Left ventricle myocardium inferior (tissue), 1 donor: ENCODE measurements at regions of chr3 and their contacts with region 1.

Region 1: DNA sequence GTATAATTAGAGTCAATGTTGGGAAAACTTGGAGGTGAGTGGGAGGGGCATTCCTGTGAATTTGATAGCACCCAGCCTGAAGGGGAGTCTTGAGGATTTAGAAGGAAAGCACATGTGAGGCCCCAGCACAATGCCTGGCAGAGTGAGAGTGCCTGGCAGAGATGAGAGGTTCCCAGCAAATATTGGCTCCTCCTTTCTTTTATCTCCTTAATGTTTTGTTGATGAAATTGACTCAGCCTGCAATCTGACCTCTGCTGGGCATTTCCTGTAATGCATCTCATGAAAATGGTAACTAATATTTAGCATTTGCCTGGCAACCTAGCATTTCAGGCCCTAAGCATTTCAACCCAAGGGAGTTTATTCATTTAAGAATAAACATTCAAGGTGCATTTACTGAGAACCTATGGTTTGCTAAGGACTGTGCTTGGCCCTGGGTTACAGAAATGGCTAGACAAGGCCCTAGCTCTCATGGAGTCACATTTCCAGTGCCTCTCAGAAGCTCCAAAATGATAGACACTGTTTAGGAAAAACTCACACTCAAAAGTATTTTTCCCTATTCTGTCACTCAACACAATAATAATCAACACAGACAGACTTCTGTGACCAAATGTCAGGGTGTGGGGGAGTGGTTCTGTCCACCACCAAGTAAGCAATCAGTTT is 19.0 kb downstream of the PDHB start:
- DNase-seq: peak; percentile 33
- H3K4me3 ChIP-seq: no peak overlapping the region
- H3K27ac ChIP-seq: peak overlapping the region; percentile 12
- H3K4me1 ChIP-seq: peaks cover 23% of the 10 kb centered on the region
- H3K27me3 ChIP-seq: no peaks in the 10 kb centered on the region
- CTCF ChIP-seq: peak; percentile 86

Region 2: GRCh38 chr3:58324391-58325390 is 90.0 kb before region 1 on chr3:
- intact Hi-C with region 1: loop called (anchors 5 kb)
- DNase-seq: no peak
- H3K4me3 ChIP-seq: no peak overlapping the region
- H3K27ac ChIP-seq: peak overlapping the region; percentile 50
- H3K4me1 ChIP-seq: peaks cover 19% of the 10 kb centered on the region
- H3K27me3 ChIP-seq: no peaks in the 10 kb centered on the region
- CTCF ChIP-seq: no peak

Region 3: DNA sequence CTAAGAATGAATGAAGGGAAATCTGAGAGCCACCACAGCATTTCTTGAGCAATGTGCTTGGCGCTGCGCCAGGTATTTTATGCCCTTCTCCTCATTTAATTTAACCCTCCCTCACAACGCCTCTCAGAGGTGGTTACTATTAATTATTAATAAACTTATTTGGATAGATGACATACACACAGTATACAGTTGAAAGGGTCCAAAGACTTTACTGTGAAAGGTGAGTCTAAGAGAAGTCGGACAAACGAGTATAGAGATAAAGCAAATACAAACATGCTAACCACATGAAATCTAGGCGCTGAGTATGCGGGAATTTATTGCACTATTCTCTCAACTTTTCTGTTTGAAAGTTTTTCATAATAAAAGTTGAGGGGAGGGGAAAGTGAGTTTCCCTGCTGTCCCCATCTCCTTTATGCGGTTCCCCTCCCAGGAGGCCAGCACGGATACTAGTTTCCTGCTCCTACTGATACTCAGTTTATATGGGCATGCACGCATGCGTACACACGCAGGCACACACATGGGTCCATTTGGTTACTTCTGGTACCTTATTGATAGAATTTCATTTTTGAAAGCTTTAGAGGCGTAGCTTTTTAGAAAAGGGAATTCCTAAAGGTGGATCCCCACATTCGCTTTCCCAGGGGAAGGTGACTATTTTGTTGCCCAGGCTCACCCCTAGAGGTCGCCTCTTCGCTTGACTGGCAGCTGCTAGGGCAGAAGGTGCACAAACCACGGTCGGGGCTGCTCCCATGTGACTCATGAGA is 48.7 kb after region 1 on chr3:
- intact Hi-C with region 1: no loop called
- DNase-seq: peak; percentile 62
- H3K4me3 ChIP-seq: peak overlapping the region; percentile 53
- H3K27ac ChIP-seq: no peak overlapping the region
- H3K4me1 ChIP-seq: peaks cover 13% of the 10 kb centered on the region
- H3K27me3 ChIP-seq: no peaks in the 10 kb centered on the region
- CTCF ChIP-seq: peak; percentile 83